ENCODE measurements at regions of chr12 and their contacts with region 1.

Region 1: GRCh38 chr12:115916910-115917668 is 360.4 kb downstream of the MED13L start:
- DNase-seq: peak; percentile 65 to 81
- ATAC-seq: peak; percentile 71 to 94 (median 84)
- H3K4me3 ChIP-seq: no peak overlapping the region
- H3K4me3 Mint-ChIP-seq: no peak overlapping the region
- H3K27ac ChIP-seq: no peak overlapping the region
- H3K27ac Mint-ChIP-seq: no peak overlapping the region
- H3K4me1 ChIP-seq: peaks cover 3% of the 10 kb centered on the region
- H3K4me1 Mint-ChIP-seq: no peaks in the 10 kb centered on the region
- H3K27me3 ChIP-seq: peaks cover 7% of the 10 kb centered on the region
- H3K27me3 Mint-ChIP-seq: peaks cover 29 to 41% of the 10 kb centered on the region in 2 donors
- CTCF ChIP-seq: peak; percentile 93

Region 2: DNA sequence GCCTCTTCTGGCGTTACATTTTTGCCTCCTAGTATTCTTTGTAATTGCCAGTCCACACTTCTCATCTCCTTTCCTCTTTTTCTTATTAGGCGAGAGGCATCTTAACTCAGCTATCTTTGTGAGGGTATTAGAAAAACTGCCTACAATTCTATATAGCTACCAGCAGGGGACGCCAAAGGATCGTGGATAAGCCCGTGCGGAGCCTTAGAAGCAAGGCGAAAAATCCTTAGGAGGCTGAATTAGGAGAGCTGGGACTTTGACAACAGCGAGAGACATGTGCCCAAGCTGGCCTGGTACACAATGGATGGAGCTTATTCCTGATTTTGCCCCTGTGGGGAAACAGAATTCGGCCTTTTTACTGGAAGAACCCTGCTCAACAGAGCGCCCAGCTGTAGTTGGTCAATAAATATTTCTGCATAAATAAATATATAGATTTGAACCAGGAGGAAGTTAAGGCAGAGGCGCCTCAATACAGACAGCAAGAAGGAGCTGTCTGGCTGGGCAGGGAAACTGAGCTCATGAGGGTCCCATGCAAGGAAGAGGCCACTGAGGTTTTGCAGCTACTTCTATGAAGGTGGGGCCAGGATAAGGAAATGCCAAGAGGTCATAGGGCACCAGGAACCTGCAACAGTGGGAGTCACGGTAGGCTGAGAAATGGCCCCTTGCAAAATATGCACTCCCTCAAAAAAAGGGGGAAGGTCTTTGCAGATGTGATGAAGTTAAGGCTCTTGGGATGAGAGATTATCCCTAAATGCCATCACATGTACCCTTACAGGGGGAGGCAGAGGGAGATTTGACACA is 1936.4 kb before region 1 on chr12:
- intact Hi-C with region 1: loop called (anchors 5 kb)
- DNase-seq: peak in 1 of 2 donors; percentile 72
- ATAC-seq: peak in 1 of 3 donors; percentile 57
- H3K4me3 ChIP-seq: no peak overlapping the region
- H3K4me3 Mint-ChIP-seq: no peak overlapping the region
- H3K27ac ChIP-seq: no peak overlapping the region
- H3K27ac Mint-ChIP-seq: no peak overlapping the region
- H3K4me1 ChIP-seq: no peaks in the 10 kb centered on the region
- H3K4me1 Mint-ChIP-seq: no peaks in the 10 kb centered on the region
- H3K27me3 ChIP-seq: no peaks in the 10 kb centered on the region
- H3K27me3 Mint-ChIP-seq: peaks cover 7 to 23% of the 10 kb centered on the region in 2 donors
- CTCF ChIP-seq: peak; percentile 69

Region 3: GRCh38 chr12:114662512-114663177 is 1254.4 kb before region 1 on chr12:
- intact Hi-C with region 1: loop called (anchors 2 kb)
- DNase-seq: peak; percentile 30 to 68
- ATAC-seq: peak in 2 of 3 donors; percentile 35 to 72
- H3K4me3 ChIP-seq: no peak overlapping the region
- H3K4me3 Mint-ChIP-seq: no peak overlapping the region
- H3K27ac ChIP-seq: no peak overlapping the region
- H3K27ac Mint-ChIP-seq: no peak overlapping the region
- H3K4me1 ChIP-seq: no peaks in the 10 kb centered on the region
- H3K4me1 Mint-ChIP-seq: peaks cover 0 to 4% of the 10 kb centered on the region in 2 donors
- H3K27me3 ChIP-seq: peaks cover 14% of the 10 kb centered on the region
- H3K27me3 Mint-ChIP-seq: peaks cover 30 to 37% of the 10 kb centered on the region in 2 donors
- CTCF ChIP-seq: peak; percentile 83

Region 4: GRCh38 chr12:115871714-115872113 is 45.4 kb before region 1 on chr12:
- intact Hi-C with region 1: no loop called
- DNase-seq: no peak
- ATAC-seq: peak in 1 of 3 donors; percentile 39
- H3K4me3 ChIP-seq: no peak overlapping the region
- H3K4me3 Mint-ChIP-seq: no peak overlapping the region
- H3K27ac ChIP-seq: no peak overlapping the region
- H3K27ac Mint-ChIP-seq: no peak overlapping the region
- H3K4me1 ChIP-seq: no peaks in the 10 kb centered on the region
- H3K4me1 Mint-ChIP-seq: peaks cover 0 to 6% of the 10 kb centered on the region in 2 donors
- H3K27me3 ChIP-seq: peaks cover 3% of the 10 kb centered on the region
- H3K27me3 Mint-ChIP-seq: peaks cover 30% of the 10 kb centered on the region in 2 donors
- CTCF ChIP-seq: peak; percentile 25

Region 5: GRCh38 chr12:115946867-115947696 is 30.0 kb after region 1 on chr12:
- intact Hi-C with region 1: no loop called
- DNase-seq: no peak
- ATAC-seq: no peak
- H3K4me3 ChIP-seq: no peak overlapping the region
- H3K4me3 Mint-ChIP-seq: no peak overlapping the region
- H3K27ac ChIP-seq: no peak overlapping the region
- H3K27ac Mint-ChIP-seq: no peak overlapping the region
- H3K4me1 ChIP-seq: no peaks in the 10 kb centered on the region
- H3K4me1 Mint-ChIP-seq: no peaks in the 10 kb centered on the region
- H3K27me3 ChIP-seq: no peaks in the 10 kb centered on the region
- H3K27me3 Mint-ChIP-seq: no peaks in the 10 kb centered on the region
- CTCF ChIP-seq: no peak

Measured in natural killer cell (primary cell).